IMR-90 (cell line): ENCODE measurements at regions of chr2 and their contacts with region 1.

Region 1: GRCh38 chr2:135839713-135840112 is 2.7 kb upstream of the LCT start:
- DNase-seq: peak; percentile 86
- ATAC-seq: peak; percentile 88
- H3K4me3 ChIP-seq: no peak overlapping the region
- H3K27ac ChIP-seq: no peak overlapping the region
- H3K4me1 ChIP-seq: peaks cover 5% of the 10 kb centered on the region
- H3K27me3 ChIP-seq: no peaks in the 10 kb centered on the region
- CTCF ChIP-seq: no peak
- POLR2A ChIP-seq: no peak
- RAD21 ChIP-seq: no peak

Region 2: DNA sequence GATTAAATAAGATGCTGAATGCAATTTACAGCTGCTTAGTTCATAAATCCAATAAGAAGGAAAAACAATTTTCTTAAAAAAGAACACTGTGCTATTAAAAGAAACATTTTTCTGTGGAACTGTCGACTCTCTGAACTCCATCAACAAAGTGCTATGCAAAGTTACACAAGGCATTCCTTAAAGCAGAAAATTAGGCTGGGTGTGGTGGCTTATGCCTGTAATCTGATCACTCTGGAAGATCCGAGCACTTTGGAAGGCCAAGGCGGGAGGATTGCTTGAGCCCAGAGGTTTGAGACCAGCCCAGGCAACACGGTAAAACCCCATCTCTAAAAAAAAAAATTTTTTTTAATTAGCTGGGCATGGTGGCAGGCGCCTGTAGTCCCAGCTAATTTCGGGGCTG is 23.5 kb after region 1 on chr2:
- CTCF ChIA-PET with region 1: no interaction called
- POLR2A ChIA-PET with region 1: no interaction called
- dilution Hi-C with region 1: no loop called
- in situ Hi-C with region 1: no loop called
- intact Hi-C with region 1: loop called (anchors 2 kb)
- DNase-seq: no peak
- ATAC-seq: peak; percentile 32; the same call in 1 of the 2 replicates
- H3K4me3 ChIP-seq: no peak overlapping the region
- H3K27ac ChIP-seq: no peak overlapping the region
- H3K4me1 ChIP-seq: no peaks in the 10 kb centered on the region
- H3K27me3 ChIP-seq: no peaks in the 10 kb centered on the region
- CTCF ChIP-seq: no peak
- POLR2A ChIP-seq: no peak
- RAD21 ChIP-seq: no peak

Region 3: GRCh38 chr2:136154402-136154783 is 314.7 kb after region 1 on chr2:
- CTCF ChIA-PET with region 1: no interaction called
- POLR2A ChIA-PET with region 1: no interaction called
- dilution Hi-C with region 1: no loop called
- in situ Hi-C with region 1: no loop called
- intact Hi-C with region 1: no loop called
- DNase-seq: no peak
- ATAC-seq: no peak
- H3K4me3 ChIP-seq: no peak overlapping the region
- H3K27ac ChIP-seq: no peak overlapping the region
- H3K4me1 ChIP-seq: no peaks in the 10 kb centered on the region
- H3K27me3 ChIP-seq: no peaks in the 10 kb centered on the region
- CTCF ChIP-seq: no peak
- POLR2A ChIP-seq: no peak
- RAD21 ChIP-seq: no peak